ENCODE measurements at regions of chr1 and their contacts with region 1.

Region 1: DNA sequence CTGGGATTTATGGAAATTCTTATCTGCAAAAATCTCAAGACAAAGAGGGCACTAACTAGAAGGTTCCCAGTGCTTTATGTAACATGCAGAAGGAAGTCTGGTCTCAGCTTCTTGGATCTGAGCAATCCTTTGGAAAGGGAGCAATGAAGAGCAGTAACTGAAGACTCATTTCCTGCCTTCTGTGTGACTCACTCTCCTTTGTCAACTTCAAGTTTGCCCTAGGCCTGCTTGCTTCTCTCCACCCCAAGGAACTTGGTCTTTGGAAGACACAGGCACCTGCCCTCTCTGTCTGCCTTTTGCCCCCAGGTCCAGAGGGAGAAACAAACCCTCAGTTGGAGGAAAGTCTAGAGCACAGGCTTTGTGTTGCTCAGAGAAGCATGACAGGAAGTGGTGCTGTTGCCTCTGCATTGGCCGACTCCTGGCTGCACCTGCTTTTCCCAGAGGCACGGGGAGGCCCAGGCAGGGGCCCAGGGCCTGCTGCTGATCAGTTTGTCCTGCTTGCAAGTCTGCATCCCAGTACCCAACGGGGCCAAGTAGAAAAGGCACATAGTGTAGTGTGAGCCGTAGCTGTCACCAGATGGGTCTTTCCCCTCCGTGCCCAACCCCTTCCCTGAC is 137.2 kb downstream of the DHRS3 start:
- DNase-seq: peak in 1 of 2 donors; percentile 62
- ATAC-seq: peak; percentile 26
- H3K4me3 ChIP-seq: no peak overlapping the region
- H3K27ac ChIP-seq: peak overlapping the region in 1 of 2 donors; percentile 49
- H3K4me1 ChIP-seq: peaks cover 2 to 18% of the 10 kb centered on the region in 2 donors
- H3K27me3 ChIP-seq: no peaks in the 10 kb centered on the region

Region 2: DNA sequence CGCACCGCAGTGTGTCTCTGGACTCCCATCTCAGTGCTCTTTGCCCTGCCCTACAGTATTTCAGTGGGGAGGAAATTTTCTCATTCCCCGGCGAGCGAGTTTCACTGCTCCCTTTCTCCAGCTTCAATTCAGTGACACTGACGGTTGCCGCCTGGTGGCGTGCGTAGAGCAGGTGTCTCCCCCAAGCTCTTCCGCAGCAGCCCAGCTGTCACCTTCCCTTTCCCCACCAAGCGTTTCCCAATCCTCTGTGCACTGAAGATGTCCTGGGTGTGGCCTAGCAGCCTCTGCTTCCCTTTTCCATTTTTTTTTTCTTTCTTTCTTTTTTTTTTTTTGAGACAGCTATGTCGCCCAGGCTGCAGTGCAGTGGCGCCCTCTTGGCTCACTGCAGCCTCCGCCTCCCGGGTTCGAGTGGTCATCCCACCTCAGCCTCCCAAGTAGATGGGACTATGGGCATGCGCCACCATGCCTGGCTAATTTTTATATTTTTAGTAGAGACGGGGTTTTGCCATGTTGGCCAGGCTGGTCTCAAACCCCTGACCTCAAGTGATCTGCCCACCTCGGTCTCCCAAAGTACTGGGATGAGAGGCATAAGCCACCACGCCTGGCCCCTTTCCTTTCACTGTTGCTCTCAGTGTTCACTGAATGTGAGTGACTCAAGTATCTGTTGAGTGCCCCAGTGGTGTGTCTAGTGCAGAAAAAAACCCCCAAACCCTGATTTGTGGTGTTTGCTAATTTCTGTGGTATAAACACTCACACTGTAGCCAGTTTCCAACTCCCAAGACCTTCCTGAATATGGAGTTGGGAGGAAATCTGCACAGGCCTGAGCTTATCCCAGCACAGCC is 284.0 kb before region 1 on chr1:
- intact Hi-C with region 1: no loop called
- DNase-seq: peak in 1 of 2 donors; percentile 83
- ATAC-seq: peak; percentile 45
- H3K4me3 ChIP-seq: no peak overlapping the region
- H3K27ac ChIP-seq: no peak overlapping the region
- H3K4me1 ChIP-seq: no peaks in the 10 kb centered on the region
- H3K27me3 ChIP-seq: no peaks in the 10 kb centered on the region

Region 3: GRCh38 chr1:12446593-12446992 is 34.3 kb before region 1 on chr1:
- intact Hi-C with region 1: loop called in 1 of 2 experiments (anchors 1 kb)
- DNase-seq: no peak
- ATAC-seq: no peak
- H3K4me3 ChIP-seq: no peak overlapping the region
- H3K27ac ChIP-seq: peak overlapping the region; percentile 17 to 76
- H3K4me1 ChIP-seq: peaks cover 3 to 19% of the 10 kb centered on the region in 2 donors
- H3K27me3 ChIP-seq: no peaks in the 10 kb centered on the region

Region 4: GRCh38 chr1:12528021-12528852 is 47.4 kb after region 1 on chr1:
- intact Hi-C with region 1: no loop called
- DNase-seq: peak; percentile 81 to 85
- ATAC-seq: peak; percentile 47
- H3K4me3 ChIP-seq: no peak overlapping the region
- H3K27ac ChIP-seq: no peak overlapping the region
- H3K4me1 ChIP-seq: no peaks in the 10 kb centered on the region
- H3K27me3 ChIP-seq: no peaks in the 10 kb centered on the region

Region 5: GRCh38 chr1:12539705-12540579 is 59.1 kb after region 1 on chr1:
- intact Hi-C with region 1: no loop called
- DNase-seq: peak; percentile 94
- ATAC-seq: peak; percentile 92
- H3K4me3 ChIP-seq: no peak overlapping the region
- H3K27ac ChIP-seq: peak overlapping the region in 1 of 2 donors; percentile 60
- H3K4me1 ChIP-seq: no peaks in the 10 kb centered on the region
- H3K27me3 ChIP-seq: no peaks in the 10 kb centered on the region

Region 6: DNA sequence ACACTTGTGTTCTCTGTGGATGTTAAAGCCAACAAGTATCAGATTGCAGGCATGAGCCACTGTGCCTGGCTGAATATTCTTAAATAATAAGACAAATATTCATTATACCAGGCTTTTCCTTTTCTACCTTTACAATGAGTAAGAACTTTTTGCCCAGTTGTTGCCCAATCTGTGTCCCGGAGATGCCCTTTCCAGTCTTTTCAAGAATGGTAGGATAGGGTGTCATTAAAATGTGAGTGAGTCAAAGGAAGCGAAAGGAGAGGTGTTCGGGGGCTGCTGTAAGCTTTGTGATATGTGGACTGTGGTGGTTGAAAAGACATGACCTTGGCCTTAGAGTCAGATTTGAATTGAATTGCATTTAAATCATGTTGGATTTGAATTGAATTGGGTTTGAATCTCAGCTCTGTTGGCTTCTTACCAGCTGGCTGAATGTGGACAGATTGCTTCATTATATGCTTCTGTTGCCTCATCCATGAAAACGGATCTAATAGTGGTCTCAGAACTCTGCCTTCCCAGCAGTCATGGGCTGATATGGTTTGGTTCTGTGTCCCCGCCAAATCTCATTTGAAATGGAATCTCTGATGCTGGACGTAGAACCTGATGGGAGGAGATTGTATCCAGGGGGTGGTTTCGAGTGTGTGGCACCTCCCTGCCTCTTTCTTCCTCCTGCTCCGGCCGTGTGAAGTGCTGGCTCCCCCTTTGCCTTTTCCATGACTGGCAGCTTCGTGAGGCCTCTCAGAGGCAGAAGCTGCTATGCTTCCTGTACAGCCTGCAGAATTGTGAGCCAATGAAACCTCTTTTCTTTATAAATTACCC is 212.3 kb after region 1 on chr1:
- intact Hi-C with region 1: no loop called
- DNase-seq: no peak
- ATAC-seq: peak; percentile 56
- H3K4me3 ChIP-seq: no peak overlapping the region
- H3K27ac ChIP-seq: no peak overlapping the region
- H3K4me1 ChIP-seq: no peaks in the 10 kb centered on the region
- H3K27me3 ChIP-seq: no peaks in the 10 kb centered on the region